ENCODE measurements at regions of chr3 and their contacts with region 1.

Region 1: GRCh38 chr3:4656059-4656458 is 162.9 kb downstream of the ITPR1 start:
- DNase-seq: peak; percentile 36 to 69
- H3K4me3 ChIP-seq: no peak overlapping the region
- H3K27ac ChIP-seq: no peak overlapping the region
- H3K4me1 ChIP-seq: no peaks in the 10 kb centered on the region
- H3K27me3 ChIP-seq: no peaks in the 10 kb centered on the region
- CTCF ChIP-seq: peak; percentile 79

Region 2: DNA sequence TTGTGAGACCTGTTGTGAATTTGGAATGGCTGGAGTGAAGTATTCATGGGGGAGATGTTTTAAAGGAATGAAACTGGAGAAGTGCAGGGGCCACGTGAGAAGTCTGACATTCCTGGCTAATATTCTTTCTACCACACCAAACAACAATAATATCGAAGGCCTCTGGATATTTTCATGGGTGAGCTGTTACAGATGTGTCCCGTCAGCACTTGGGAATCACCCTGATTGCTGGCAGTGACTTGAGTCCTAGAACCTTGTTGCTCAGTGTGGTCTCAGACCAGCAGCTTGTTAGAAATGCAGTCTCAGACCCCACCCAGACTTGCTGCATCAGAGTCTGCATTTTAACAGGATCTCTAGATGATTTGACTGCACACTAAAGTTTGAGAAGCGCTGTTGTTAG is 49.1 kb before region 1 on chr3:
- CTCF ChIA-PET with region 1: no interaction called
- POLR2A ChIA-PET with region 1: no interaction called
- intact Hi-C with region 1: no loop called
- DNase-seq: no peak
- H3K4me3 ChIP-seq: no peak overlapping the region
- H3K27ac ChIP-seq: no peak overlapping the region
- H3K4me1 ChIP-seq: no peaks in the 10 kb centered on the region
- H3K27me3 ChIP-seq: no peaks in the 10 kb centered on the region
- CTCF ChIP-seq: no peak

Region 3: DNA sequence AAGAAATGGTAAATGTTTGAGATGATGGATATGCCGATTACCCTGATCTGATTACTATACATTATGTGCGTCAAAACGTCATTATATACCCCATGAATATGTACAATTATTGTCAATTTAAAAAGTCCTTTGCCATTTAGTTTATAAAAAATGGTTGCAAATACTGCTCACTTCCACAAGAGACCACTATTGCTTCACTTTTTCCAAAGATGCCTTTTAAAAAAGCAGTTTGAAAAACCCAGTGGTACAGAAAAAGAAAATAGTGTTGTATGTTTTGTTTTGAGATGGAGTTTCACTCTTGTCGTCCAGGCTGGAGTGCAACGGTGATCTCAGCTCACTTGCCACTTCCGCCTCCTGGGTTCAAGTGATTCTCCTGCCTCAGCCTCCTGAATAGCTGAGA is 570.7 kb after region 1 on chr3:
- CTCF ChIA-PET with region 1: no interaction called
- POLR2A ChIA-PET with region 1: no interaction called
- intact Hi-C with region 1: loop called (anchors 1 kb)
- DNase-seq: no peak
- H3K4me3 ChIP-seq: no peak overlapping the region
- H3K27ac ChIP-seq: no peak overlapping the region
- H3K4me1 ChIP-seq: no peaks in the 10 kb centered on the region
- H3K27me3 ChIP-seq: no peaks in the 10 kb centered on the region
- CTCF ChIP-seq: peak; percentile 45

Measured in PC-9 (cell line).